ENCODE measurements at regions of chr13 and their contacts with region 1.

Region 1: DNA sequence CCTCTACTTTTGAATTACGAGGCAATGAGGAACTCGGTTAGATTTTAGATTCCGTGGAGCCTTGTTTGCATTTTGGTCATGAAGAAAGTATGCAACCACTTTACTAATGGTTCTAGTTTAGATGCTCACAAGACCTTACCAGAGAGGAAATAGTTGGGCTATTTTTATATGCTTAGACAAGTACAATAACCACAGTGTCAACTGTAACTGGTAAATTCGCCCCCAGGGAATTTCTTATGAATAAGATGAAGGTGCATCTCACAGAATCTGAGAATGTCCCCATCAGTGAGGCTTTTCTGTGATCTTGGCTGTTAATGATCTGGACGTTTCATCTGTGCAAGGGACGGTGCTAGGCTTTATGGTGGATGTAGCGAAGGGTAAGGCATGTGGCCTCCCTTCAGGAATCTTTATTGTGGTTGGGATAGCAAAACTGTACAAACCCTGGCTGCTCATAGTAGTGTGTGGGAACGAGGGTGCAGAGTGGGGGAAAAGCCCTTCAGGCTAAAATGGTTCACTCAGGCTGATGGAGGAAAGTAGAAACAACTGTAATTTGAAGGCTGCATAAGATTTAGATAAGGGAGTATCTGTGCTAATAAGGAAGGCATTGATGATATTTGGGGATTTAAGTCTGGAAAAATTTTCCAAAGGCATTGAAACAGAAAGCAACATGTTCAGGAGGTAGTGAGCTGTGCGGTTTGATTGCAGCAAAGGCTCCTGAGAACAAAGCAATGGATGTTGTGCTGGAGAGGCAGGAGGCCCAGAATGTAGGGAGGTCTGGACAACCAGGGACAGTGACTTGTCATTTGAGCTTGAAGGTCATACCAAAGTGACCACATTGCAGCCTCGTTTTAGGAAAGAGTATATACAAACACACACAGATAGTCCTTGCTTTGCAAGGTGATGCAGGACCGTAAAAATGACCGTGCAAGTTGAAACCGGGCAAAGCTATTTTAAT is 28.4 kb downstream of the UBAC2 start:
- DNase-seq: no peak
- H3K4me3 Mint-ChIP-seq: peak overlapping the region; percentile 56
- H3K27ac Mint-ChIP-seq: peak overlapping the region; percentile 54
- H3K4me1 Mint-ChIP-seq: peaks cover 75% of the 10 kb centered on the region
- H3K27me3 Mint-ChIP-seq: no peaks in the 10 kb centered on the region

Region 2: GRCh38 chr13:98368019-98368418 is 861.0 kb before region 1 on chr13:
- CTCF ChIA-PET with region 1: no interaction called
- intact Hi-C with region 1: no loop called
- DNase-seq: no peak
- H3K4me3 Mint-ChIP-seq: no peak overlapping the region
- H3K27ac Mint-ChIP-seq: no peak overlapping the region
- H3K4me1 Mint-ChIP-seq: no peaks in the 10 kb centered on the region
- H3K27me3 Mint-ChIP-seq: peaks cover 8% of the 10 kb centered on the region

Region 3: DNA sequence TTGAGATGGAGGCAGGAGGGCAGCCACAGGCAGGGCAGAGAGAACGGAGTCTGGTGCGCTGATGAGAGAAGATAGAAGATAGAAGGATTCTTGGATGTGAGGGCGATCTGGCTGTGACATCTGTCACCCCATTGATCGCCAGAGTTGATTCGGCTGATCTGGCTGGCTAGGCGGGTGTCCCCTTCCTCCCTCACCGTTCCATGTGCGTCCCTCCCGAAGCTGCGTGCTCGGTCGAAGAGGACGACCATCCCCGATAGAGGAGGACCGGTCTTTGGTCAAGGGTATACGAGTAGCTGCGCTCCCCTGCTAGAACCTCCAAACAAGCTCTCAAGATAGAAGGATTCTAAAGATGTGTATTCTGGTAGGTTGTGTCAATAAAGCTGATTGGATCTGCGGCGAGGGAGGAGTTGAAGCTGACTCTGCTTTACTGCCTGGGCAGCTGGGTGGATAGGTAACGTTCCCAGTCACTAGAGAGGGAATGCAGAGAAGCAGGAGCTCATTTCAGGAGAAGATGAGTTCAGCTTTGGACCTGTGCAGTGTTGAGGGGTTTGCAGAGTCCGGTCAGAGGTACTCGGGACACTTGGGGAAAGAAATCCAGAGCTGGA is 23.3 kb before region 1 on chr13:
- CTCF ChIA-PET with region 1: interaction called, 4 read pairs
- intact Hi-C with region 1: loop called (anchors 1 kb)
- DNase-seq: no peak
- H3K4me3 Mint-ChIP-seq: no peak overlapping the region
- H3K27ac Mint-ChIP-seq: peak overlapping the region; percentile 14
- H3K4me1 Mint-ChIP-seq: peaks cover 77% of the 10 kb centered on the region
- H3K27me3 Mint-ChIP-seq: no peaks in the 10 kb centered on the region